Heart right ventricle (tissue), 16 donors: ENCODE measurements at regions of chr14 and their contacts with region 1.

Region 1: GRCh38 chr14:75861161-75861621 is 120.6 kb downstream of the TGFB3 start:
- DNase-seq: no peak
- ATAC-seq: peak in 7 of 8 donors; percentile 55 to 99 (median 85)
- H3K4me3 ChIP-seq: no peak overlapping the region
- H3K27ac ChIP-seq: peak overlapping the region in 4 of 10 donors; percentile 18 to 48 (median 32)
- H3K4me1 ChIP-seq: peaks cover 0 to 19% (median 10%) of the 10 kb centered on the region in 9 donors
- H3K27me3 ChIP-seq: no peaks in the 10 kb centered on the region
- CTCF ChIP-seq: no peak

Region 2: DNA sequence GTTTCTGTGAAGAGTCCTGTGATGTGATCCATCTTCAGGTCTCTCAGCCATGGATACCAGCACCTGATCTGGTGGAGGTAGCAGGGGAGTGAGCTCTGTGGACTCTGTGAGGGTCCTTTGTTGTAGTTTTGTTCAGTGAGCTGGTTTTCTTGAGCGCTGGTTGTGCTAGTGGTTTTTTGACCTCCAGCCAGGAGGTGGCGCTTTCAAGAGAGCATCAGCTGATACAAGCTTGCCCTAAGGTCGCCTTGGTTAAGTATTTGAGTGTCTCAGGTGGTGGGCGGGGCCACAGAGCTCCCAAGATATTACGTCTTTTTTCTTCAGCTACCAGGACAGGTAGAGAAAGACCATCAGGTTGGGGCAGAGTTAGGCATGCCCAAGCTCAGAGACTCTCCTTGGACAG is 60.4 kb before region 1 on chr14:
- intact Hi-C with region 1: loop called in 1 of 10 experiments (anchors 10 kb)
- DNase-seq: no peak
- ATAC-seq: no peak
- H3K4me3 ChIP-seq: no peak overlapping the region
- H3K27ac ChIP-seq: no peak overlapping the region
- H3K4me1 ChIP-seq: peaks cover 0 to 26% (median 13%) of the 10 kb centered on the region in 9 donors
- H3K27me3 ChIP-seq: no peaks in the 10 kb centered on the region
- CTCF ChIP-seq: peak in 1 of 9 donors; percentile 14